ENCODE measurements at regions of chr11 and their contacts with region 1.

Region 1: DNA sequence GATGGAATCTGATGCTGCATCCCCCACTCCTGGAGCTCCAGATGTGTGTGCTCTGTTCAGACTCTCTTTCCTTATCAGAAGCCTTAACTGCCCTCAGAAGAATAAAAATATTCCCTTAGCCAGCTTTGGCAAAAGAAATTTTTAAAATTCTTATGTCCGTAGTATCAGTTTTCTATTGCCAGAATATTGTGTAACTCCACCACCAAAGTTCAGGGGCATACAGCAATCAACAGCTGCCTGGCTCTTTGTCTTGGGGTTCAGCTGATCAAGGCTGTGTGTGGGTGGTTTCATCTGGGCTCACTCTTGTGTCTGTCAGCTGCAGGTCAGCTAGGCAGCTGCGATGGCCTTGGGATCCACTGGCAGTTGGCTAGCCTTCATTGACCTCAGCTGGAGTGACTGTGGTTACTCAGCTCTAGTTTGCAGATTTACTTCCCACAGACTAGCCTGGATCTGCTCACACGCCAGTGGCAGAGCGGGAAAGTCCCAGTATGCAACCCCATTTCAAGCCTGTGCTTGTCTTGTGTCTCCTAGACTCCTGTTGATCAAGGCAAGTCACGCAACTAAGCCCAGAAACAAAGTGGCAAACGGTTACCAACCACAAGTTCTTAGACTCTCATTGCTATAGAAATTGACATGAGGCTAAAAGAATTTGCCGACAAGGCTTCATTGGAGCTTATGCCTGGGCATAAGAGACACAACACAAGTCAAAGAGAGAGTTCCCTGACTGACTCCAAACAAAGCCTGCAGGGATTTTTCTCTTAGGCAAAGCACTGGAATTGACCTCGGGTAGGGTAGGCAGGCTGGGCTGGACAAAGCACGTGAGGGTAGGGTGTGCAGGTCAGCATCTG is 7.4 kb downstream of the TMEM138 start:
- DNase-seq: no peak
- H3K4me3 ChIP-seq: no peak overlapping the region
- H3K27ac ChIP-seq: no peak overlapping the region
- H3K4me1 ChIP-seq: no peaks in the 10 kb centered on the region
- H3K27me3 ChIP-seq: no peaks in the 10 kb centered on the region
- CTCF ChIP-seq: no peak
- EP300 ChIP-seq: no peak
- POLR2A ChIP-seq: peak in 1 of 2 experiments; percentile 6; a peak in 1 of 3 replicates
- RAD21 ChIP-seq: no peak

Region 2: DNA sequence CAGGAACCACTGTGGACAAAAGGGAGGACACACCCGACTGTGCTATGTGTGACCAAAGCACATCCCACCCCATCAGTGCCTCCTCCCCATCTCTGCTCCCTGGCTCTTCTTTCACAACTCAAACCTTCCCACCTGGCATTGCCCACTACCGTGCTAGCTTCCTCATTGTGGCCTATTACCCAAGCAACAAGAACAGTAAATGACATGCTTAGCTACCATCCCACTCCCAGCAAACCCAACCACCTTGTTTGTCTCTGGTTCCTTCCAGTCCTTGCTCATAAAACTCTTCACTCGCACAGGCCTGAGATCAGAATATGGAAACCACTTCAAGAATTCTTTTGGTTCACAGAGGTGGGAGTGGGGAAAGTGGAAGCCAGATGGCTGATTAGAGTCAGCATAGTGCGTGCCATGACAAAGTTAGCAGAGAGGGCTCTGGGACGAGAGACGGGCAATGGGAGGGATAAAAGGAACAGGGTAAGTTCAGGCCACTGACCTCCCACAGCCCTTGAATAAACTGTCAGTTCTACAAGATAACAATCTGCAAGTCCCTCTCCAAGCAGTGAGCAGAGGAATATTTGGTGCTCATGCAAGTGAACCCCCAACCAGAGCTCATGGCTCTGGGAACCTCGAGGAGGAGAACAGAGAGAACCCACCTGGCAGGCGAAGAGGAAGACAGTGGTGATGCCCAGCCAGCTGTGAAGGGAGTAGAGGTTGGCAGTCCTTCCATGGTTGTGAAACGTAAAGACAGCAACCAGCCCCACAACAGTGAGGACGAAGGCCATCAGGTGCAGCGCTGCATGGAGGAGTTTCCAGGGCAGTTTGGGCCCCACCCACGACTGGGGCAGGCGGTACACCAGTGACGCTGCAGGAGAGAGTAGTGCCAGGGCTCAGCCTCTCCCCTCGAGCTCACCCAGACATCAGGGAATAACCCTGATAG is 16.2 kb before region 1 on chr11:
- CTCF ChIA-PET with region 1: interaction called, 10 read pairs
- POLR2A ChIA-PET with region 1: interaction called, 1,106 read pairs
- DNase-seq: no peak
- H3K4me3 ChIP-seq: no peak overlapping the region
- H3K27ac ChIP-seq: no peak overlapping the region
- H3K4me1 ChIP-seq: no peaks in the 10 kb centered on the region
- H3K27me3 ChIP-seq: no peaks in the 10 kb centered on the region
- CTCF ChIP-seq: no peak
- EP300 ChIP-seq: no peak
- POLR2A ChIP-seq: no peak
- RAD21 ChIP-seq: no peak